Endothelial cell of umbilical vein (primary cell): ENCODE measurements at regions of chr10 and their contacts with region 1.

Region 1: DNA sequence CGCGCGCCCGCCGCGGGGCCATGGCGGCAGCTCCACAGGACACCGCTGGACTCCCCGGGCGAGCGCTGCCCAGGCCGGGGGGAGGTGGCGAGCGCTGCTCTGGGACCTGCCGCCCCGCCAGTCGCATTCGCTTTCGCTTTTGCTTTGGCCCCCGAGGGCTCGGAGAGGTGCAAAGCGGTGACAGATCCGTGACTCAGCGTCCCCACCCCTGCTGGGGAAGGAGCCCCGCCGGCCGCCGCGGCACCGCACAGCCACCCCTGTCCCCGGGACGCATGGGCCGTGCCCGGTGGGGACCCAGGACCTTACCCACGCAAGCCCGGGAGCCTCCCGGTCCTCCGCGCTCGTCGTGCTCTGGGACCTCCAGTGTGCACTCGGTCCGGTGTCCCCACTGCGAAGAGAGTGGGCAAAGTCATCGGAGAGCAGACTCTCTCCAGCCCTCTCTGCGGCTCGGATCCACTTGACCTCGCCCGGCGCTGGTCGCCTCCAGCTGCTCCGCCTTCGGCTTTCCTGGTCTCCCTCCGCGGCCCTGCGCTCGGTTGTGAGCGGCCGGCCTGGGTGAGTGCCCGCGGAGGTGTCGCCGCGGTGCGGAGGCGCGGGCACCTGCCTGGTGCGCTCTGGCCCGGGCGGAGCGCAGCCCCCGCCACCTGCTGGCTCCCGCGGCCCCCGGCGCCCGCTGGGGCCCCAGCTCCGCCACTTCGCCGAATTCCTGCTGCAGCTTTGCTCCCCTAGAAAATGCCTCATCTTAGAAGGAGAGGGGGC is at the start of gene IL15RA:
- DNase-seq: peak; percentile 82
- H3K4me3 ChIP-seq: peak within 1 kb of the TSS; percentile 10 to 98 (median 47)
- H3K27ac ChIP-seq: peak within 1 kb of the TSS; percentile 60
- H3K4me1 ChIP-seq: peaks cover 14% of the 10 kb centered on the region
- H3K27me3 ChIP-seq: peaks cover 0 to 2% of the 10 kb centered on the region in 2 experiments
- CTCF ChIP-seq: peak; percentile 6 to 13
- POLR2A ChIP-seq: no peak
- total RNA-seq, gene IL15RA: 16.1 and 18.8 TPM in 2 replicates

Region 2: DNA sequence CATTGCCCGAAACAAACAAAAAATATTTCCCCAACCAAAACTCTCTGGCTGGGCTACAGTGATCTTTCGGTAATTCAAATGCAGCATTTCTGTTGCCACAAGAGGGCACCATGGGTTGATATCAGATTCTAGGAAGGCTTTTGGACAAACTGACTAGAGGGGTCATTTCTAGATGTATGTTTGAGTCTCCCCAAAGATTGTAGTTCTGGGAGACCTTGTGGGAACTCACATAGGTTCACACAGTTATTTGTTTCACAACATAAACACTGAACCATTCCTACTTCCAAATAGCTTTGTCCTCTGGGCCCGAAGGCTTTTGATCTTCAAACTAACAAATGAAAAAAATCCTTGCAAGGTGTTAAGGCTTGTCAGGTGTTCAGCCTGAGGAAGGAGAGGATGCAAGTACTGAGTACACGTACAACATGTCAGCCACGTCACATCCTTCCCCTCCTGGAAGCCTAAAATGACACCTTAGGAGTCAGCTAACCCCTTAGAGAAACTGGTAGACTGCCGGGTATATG is 36.7 kb after region 1 on chr10:
- CTCF ChIA-PET with region 1: interaction called, 17 read pairs
- POLR2A ChIA-PET with region 1: no interaction called
- dilution Hi-C with region 1: no loop called
- intact Hi-C with region 1: loop called (anchors 5 kb)
- DNase-seq: peak; percentile 53
- H3K4me3 ChIP-seq: no peak overlapping the region
- H3K27ac ChIP-seq: no peak overlapping the region
- H3K4me1 ChIP-seq: no peaks in the 10 kb centered on the region
- H3K27me3 ChIP-seq: peaks cover 0 to 6% of the 10 kb centered on the region in 2 experiments
- CTCF ChIP-seq: peak; percentile 58 to 60
- POLR2A ChIP-seq: no peak